Common myeloid progenitor, CD34-positive (primary cell): ENCODE measurements at regions of chr11 and their contacts with region 1.

Region 1: GRCh38 chr11:33257160-33257896 is at the start of gene HIPK3:
- DNase-seq: peak; percentile 80 to 89 (median 85)
- H3K4me3 ChIP-seq: peak within 1 kb of the TSS; percentile 82 to 100 (median 96)
- H3K27ac ChIP-seq: peak within 1 kb of the TSS; percentile 98 to 99
- H3K4me1 ChIP-seq: peaks cover 11 to 35% (median 21%) of the 10 kb centered on the region in 4 experiments
- H3K27me3 ChIP-seq: no peaks in the 10 kb centered on the region

Region 2: DNA sequence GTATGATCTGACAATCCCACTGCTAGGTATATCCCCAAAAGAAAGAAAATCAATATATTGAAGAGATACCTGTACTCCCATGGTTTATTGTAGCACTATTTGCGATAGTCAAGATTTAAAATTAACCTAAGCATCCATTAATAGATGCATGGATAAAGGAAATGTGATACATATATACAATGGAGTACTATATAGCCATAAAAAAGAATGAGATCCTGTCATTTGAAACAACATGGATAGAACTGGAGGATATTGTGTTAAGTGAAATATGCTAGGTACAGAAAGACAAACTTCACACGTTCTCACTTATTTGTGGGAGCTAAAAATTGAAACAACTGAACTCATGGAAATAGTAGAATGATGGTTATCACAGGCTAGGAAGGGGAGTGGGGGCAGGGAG is 14.8 kb before region 1 on chr11:
- CTCF ChIA-PET with region 1: no interaction called
- POLR2A ChIA-PET with region 1: no interaction called
- DNase-seq: no peak
- H3K4me3 ChIP-seq: no peak overlapping the region
- H3K27ac ChIP-seq: no peak overlapping the region
- H3K4me1 ChIP-seq: no peaks in the 10 kb centered on the region
- H3K27me3 ChIP-seq: no peaks in the 10 kb centered on the region

Region 3: DNA sequence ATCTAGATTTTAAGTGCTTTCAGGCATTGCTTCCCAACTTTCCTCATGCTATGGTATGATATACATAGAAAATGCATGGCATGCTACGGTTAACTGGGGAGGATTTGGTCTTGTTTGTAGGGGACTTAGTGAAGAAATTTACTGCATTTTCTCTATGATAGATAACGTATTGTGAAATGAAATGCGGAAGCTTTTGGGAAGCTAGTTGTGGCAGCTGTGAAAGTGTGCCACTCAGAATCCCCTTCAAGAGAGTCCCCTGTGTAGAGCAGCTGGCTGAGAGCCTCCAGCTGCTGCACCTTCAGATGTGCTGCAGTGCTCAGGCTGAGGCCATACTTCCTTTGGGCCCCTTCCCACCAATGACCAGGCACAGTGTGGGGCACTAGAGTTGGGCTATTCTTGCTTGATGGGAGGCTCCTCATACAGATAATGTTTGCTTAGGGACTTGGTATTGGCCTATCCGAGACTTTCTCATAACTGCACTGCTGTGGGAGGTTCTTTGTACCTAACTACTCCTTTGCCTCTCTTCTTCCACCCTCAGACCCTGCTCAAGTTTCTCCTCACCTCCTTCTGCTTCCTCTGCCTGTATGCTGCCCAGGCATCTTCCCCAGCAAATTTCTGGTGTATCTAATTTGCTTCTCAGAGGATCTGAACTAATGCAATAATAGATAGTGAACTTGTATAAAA is 67.1 kb after region 1 on chr11:
- CTCF ChIA-PET with region 1: interaction called, 10 read pairs
- POLR2A ChIA-PET with region 1: interaction called, 3 read pairs
- DNase-seq: peak in 2 of 3 donors; percentile 66 to 75
- H3K4me3 ChIP-seq: peak overlapping the region in 2 of 7 experiments; percentile 21 to 23
- H3K27ac ChIP-seq: no peak overlapping the region
- H3K4me1 ChIP-seq: peaks cover 21 to 49% (median 36%) of the 10 kb centered on the region in 4 experiments
- H3K27me3 ChIP-seq: no peaks in the 10 kb centered on the region